PC-3 (cell line): ENCODE measurements at regions of chr2 and their contacts with region 1.

Region 1: GRCh38 chr2:118371515-118371914 is 283.2 kb downstream of the INSIG2 start:
- DNase-seq: peak; percentile 75
- ATAC-seq: peak; percentile 92
- H3K4me3 ChIP-seq: no peak overlapping the region
- H3K27ac ChIP-seq: no peak overlapping the region
- H3K4me1 ChIP-seq: peaks cover 19% of the 10 kb centered on the region
- H3K27me3 ChIP-seq: no peaks in the 10 kb centered on the region
- CTCF ChIP-seq: peak; percentile 95

Region 2: DNA sequence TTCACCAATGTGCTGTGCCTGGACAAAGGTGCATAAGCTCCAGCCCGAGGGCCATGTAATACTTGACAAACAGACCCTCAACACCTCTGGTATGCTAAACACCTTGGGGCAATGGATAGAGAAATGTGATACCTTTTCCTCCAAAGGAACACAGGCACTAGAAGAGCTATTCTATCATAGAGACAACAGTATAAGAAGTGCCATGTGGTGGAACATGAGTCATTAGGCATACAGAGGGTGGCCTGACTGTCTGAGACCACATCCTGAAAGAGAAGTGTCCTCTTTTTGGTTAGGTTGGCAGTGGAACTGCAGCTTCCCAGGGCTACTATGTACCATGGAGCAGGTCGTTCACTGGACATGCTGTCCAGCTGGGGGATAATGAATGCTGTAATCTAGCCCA is 129.3 kb before region 1 on chr2:
- CTCF ChIA-PET with region 1: no interaction called
- POLR2A ChIA-PET with region 1: no interaction called
- intact Hi-C with region 1: loop called (anchors 5 kb)
- DNase-seq: peak; percentile 96
- ATAC-seq: peak; percentile 95
- H3K4me3 ChIP-seq: no peak overlapping the region
- H3K27ac ChIP-seq: peak overlapping the region; percentile 76
- H3K4me1 ChIP-seq: peaks cover 46% of the 10 kb centered on the region
- H3K27me3 ChIP-seq: no peaks in the 10 kb centered on the region
- CTCF ChIP-seq: no peak